Posterior cingulate gyrus (tissue), 11 donors: ENCODE measurements at regions of chr4 and their contacts with region 1.

Region 1: GRCh38 chr4:119314356-119314755 is 7.6 kb downstream of the FABP2 start:
- DNase-seq: no peak

Region 2: GRCh38 chr4:118883861-118884260 is 430.5 kb before region 1 on chr4:
- intact Hi-C with region 1: no loop called
- DNase-seq: no peak

Region 3: DNA sequence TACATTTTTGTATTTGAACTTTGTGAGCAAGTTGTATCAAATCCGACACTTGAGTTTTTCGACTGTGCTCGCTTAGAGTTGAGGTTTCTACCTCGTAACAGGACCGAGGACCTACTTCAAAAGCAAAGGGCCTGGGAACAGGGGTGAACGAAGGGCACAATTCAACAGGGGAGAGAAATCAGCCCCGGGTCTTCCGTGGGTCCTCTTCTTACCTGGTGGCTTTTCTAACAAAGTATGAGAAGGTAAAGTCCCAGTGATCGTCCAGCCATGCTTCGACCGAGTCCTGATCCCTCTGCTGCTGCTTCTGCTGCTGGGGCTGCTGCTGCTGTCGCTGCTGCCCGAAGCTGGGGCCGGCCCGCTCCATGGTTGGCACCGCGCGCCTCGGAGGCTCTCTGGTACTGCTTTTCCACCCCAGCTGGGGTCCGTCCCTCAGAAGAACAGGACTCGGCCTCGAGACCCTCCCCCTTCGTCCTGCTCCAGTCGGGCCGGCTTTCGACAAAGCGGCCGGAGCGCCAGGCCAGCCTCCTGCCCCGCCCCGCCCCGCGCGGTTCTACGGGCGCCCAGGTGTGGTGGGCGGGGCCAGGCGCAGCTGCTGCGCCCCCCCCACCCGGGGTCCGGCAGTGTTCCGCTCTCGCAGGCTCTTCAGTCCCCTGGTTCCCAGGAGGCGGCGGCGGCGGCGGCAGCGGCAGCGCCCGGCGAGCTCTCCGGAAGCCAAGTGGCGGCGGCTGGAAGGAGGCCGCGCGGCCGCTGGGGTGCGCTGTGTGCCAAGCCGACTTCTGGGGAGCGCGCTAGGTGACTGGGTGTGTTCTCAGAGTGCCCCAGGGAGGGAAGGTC is 314.2 kb after region 1 on chr4 and contains the start of gene PDE5A:
- intact Hi-C with region 1: loop called (anchors 10 kb)
- DNase-seq: peak; percentile 51 to 95 (median 76)

Region 4: GRCh38 chr4:120056246-120056645 is 741.9 kb after region 1 on chr4:
- intact Hi-C with region 1: loop called (anchors 5 kb)
- DNase-seq: no peak